AG04450 (cell line): ENCODE measurements at regions of chr19 and their contacts with region 1.

Region 1: DNA sequence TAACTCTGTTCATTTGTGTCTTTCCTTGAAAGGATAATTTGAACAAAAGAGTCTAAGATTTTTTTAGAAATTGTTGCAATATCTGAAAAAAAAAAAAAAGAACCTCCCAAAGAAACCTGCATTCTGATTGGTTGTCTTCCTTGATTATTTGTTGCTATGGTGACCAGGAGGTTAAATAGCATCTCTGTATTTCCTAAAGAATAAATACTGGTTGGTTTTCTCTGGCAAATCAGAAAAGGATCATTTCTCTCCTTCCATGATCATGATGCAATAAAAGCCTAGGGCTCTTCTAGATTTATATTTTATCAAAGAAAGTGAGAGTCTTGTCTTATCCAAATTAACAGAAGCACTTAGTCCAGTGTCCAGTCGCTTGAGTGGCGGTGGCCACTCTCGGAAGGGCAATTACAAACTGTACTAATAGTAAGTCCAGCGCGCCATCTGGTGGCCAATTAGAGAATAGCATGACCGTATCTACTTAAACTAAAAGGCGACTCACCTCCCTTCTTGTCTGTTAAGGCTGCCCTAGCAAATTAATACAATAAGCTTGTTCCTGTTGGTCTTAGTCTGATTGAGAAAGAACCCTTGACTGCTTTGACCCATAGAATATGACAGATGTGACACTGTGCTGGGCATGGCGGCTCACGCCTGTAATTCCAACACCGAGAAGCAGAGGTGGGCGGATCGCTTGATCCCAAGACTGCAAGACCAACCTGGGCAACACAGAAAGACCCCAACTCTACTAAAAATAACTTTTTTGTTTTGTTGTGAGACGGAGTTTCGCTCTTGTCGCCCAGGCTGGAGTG is 47.0 kb upstream of the PNMA8B start:
- DNase-seq: peak; percentile 76
- H3K4me3 ChIP-seq: no peak overlapping the region
- H3K27ac ChIP-seq: no peak overlapping the region
- H3K27me3 ChIP-seq: peaks cover 7% of the 10 kb centered on the region
- CTCF ChIP-seq: peak; percentile 81

Region 2: DNA sequence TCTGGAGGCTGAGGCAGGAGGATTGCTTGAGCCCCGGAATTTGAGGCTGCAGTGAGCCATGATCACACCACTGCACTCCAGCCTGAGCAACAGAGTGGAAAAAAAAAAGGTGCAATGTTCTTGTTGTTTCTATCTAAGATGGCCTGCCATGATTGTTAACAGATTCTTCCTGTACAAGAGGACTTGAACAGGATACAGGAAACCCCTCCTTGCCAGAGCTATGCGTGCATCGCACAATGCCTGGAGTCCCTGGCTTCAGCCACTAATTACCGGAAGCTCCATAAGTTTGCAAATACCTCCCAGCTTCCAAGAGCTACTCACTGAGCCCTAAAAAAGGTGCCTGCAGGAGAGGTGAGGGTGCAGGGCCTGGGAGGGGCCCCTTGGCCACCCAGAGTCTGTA is 258.9 kb before region 1 on chr19:
- CTCF ChIA-PET with region 1: interaction called, 34 read pairs
- POLR2A ChIA-PET with region 1: no interaction called
- DNase-seq: no peak
- H3K4me3 ChIP-seq: no peak overlapping the region
- H3K27ac ChIP-seq: no peak overlapping the region
- H3K27me3 ChIP-seq: peaks cover 4% of the 10 kb centered on the region
- CTCF ChIP-seq: no peak

Region 3: GRCh38 chr19:46513461-46514236 is 29.0 kb before region 1 on chr19:
- CTCF ChIA-PET with region 1: interaction called, 10 read pairs
- POLR2A ChIA-PET with region 1: no interaction called
- DNase-seq: no peak
- H3K4me3 ChIP-seq: no peak overlapping the region
- H3K27ac ChIP-seq: no peak overlapping the region
- H3K27me3 ChIP-seq: peaks cover 5% of the 10 kb centered on the region
- CTCF ChIP-seq: peak; percentile 70

Region 4: DNA sequence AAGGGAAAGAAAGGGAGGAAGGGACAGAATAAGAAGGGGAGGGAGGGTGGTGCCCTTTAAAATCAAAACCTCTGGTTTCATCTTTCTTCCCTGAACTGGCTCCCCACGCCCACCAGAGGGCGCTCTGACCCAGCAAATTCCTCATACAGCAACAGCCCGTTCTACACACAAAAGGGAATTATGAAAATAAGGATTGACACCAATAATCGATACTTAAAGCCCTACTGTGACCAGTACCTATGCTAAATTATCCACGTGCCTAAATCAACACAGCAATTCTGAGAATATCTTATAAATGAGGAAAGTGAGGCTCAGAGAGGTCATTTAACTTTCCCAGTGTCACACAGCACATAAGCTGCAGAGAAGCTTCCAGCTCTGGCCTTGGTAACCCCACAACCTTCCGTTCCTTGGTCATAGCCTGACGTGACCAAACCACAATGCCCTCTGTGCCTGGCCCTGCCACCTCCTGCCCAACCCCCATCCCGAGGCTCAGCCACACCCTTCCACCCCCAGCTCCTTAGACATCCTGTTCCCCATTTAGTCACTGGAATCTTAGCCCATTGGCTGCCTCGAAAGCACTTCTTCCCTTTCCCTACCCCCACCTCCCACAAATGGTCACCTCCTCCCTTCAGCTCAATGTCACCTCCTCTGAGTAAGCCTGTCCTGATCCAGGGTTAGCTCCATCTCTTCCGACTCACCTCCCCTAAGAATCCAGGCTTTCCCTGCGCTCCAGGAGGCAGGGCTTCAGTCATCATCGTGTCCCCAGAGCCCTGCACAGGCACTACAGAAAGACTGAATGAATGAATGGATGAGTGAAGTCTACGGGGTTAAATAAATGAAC is 12.8 kb before region 1 on chr19:
- CTCF ChIA-PET with region 1: interaction called, 62 read pairs
- POLR2A ChIA-PET with region 1: no interaction called
- DNase-seq: no peak
- H3K4me3 ChIP-seq: no peak overlapping the region
- H3K27ac ChIP-seq: no peak overlapping the region
- H3K27me3 ChIP-seq: peaks cover 10% of the 10 kb centered on the region
- CTCF ChIP-seq: peak; percentile 96

Region 5: DNA sequence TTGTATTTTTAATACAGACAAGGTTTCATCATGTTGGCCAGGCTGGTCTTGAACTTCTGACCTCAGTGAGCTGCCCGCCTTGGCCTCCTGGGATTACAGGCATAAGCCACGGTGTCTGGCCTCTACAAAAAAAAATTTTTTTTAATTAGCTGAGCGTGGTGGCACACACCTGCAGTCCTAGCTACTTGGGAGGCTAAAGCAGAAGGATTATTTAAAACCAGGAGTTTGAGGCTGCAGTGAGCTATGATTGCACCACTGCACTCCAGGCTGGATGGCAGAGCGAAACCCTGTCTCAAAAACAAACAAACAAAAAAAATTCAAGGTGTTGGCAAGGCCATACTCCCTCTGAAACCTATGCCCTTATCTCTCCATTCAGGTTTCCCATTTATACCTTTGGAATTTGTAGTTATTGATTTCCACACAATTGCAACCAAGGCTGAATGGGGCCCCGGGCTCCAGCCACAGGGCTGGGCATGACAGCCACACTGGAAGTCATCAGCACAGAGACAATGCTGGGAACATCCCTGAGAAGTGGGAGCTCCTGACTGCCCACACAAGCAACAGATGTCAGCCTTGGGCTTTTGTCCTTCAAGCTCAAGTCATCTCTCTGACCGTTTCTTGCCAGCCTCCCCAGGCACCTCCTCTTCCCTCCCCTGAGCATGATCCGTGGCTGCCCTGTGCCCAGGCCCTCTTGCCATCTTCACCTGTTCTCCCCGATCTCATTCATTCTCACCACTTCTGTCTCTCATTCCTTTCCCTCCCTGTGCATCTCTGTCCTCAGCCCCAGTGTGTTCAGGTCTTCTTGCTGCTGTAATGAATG is 31.3 kb after region 1 on chr19:
- CTCF ChIA-PET with region 1: interaction called, 13 read pairs
- POLR2A ChIA-PET with region 1: no interaction called
- DNase-seq: no peak
- H3K4me3 ChIP-seq: no peak overlapping the region
- H3K27ac ChIP-seq: no peak overlapping the region
- H3K27me3 ChIP-seq: peaks cover 11% of the 10 kb centered on the region
- CTCF ChIP-seq: no peak

Region 6: DNA sequence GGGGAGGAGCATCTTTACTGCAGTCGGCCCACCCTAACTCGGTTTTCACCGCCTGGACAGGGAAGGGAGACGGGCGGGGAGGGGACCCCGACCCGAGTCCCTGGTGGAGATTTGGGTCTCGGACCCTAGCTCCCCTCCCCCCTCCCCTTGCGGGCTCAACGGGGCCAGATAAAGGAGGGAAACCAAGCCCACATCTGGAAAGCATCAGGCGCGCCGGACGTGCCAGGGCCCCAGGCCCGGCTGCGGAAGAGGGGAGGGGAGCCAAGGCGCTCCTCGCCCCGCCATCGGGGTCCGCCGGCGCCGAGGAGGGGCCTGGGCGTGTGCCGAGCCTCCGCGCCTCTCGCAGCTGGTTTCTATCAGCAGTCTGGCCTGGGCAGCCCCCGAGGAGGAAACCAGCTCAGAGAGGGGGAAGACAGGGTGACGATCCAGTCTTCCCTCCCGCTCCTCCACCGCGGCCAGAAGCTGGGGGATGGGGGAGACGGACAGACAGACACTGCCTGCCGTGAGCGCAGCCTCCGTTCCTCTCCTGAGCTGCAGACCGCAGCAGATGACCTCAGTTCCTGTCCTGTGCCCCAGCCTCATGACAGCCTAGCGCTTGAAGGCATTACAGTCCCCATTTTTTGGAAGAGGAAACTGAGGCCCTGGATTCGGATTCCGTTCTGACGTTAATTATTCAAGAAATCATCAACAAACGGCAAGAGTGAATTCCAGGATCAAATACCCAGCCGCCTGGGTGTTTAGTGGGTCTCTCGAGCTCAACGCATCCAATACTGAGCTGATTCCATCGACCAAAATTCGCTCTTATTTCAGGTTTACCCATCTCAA is 96.9 kb after region 1 on chr19:
- CTCF ChIA-PET with region 1: interaction called, 14 read pairs
- POLR2A ChIA-PET with region 1: no interaction called
- DNase-seq: no peak
- H3K4me3 ChIP-seq: peak overlapping the region; percentile 50
- H3K27ac ChIP-seq: peak overlapping the region; percentile 68
- H3K27me3 ChIP-seq: peaks cover 7% of the 10 kb centered on the region
- CTCF ChIP-seq: no peak